Panc1 (cell line): ENCODE measurements at regions of chr1 and their contacts with region 1.

Region 1: GRCh38 chr1:205396967-205397616 is 24.8 kb downstream of the LEMD1 start:
- DNase-seq: peak; percentile 32
- ATAC-seq: peak; percentile 80
- H3K4me3 ChIP-seq: no peak overlapping the region
- H3K27ac ChIP-seq: no peak overlapping the region
- H3K4me1 ChIP-seq: no peaks in the 10 kb centered on the region
- H3K27me3 ChIP-seq: 0 out of 2 replicates have a peak, but pooled peaks cover 3% of the 10 kb centered on the region
- CTCF ChIP-seq: peak; percentile 81

Region 2: DNA sequence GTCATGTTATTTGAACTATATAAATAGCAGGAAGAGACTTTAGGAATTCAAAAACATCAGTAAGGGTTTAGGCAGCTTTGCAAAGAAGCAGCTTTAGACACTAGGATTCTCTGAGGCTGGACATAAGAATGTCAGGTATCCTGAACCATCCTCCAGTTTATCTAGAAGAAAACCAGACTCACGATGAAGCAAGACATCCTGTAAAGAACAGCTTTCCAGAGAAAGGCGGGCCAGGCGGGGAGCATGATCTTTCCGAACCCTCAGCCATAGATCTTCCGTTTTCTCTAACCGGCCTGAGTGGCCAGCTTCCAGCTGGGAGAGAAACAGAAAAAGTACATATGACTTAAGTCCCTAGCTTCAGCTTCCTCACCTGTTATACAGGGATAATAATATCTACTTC is 236.0 kb before region 1 on chr1:
- CTCF ChIA-PET with region 1: no interaction called
- POLR2A ChIA-PET with region 1: no interaction called
- in situ Hi-C with region 1: no loop called
- intact Hi-C with region 1: no loop called
- DNase-seq: no peak
- ATAC-seq: no peak
- H3K4me3 ChIP-seq: no peak overlapping the region
- H3K27ac ChIP-seq: no peak overlapping the region
- H3K4me1 ChIP-seq: no peaks in the 10 kb centered on the region
- H3K27me3 ChIP-seq: no peaks in the 10 kb centered on the region
- CTCF ChIP-seq: no peak

Region 3: GRCh38 chr1:205485338-205486228 is 88.5 kb after region 1 on chr1:
- CTCF ChIA-PET with region 1: interaction called, 15 read pairs
- POLR2A ChIA-PET with region 1: no interaction called
- in situ Hi-C with region 1: no loop called
- intact Hi-C with region 1: loop called (anchors 2 kb)
- DNase-seq: no peak
- ATAC-seq: peak; percentile 84
- H3K4me3 ChIP-seq: no peak overlapping the region
- H3K27ac ChIP-seq: no peak overlapping the region
- H3K4me1 ChIP-seq: peaks cover 10% of the 10 kb centered on the region
- H3K27me3 ChIP-seq: no peaks in the 10 kb centered on the region
- CTCF ChIP-seq: peak; percentile 98